Activated B cell treated with CpG ODN at 0.5 μM for 24 hours (primary cell): ENCODE measurements at regions of chr6 and their contacts with region 1.

Region 1: DNA sequence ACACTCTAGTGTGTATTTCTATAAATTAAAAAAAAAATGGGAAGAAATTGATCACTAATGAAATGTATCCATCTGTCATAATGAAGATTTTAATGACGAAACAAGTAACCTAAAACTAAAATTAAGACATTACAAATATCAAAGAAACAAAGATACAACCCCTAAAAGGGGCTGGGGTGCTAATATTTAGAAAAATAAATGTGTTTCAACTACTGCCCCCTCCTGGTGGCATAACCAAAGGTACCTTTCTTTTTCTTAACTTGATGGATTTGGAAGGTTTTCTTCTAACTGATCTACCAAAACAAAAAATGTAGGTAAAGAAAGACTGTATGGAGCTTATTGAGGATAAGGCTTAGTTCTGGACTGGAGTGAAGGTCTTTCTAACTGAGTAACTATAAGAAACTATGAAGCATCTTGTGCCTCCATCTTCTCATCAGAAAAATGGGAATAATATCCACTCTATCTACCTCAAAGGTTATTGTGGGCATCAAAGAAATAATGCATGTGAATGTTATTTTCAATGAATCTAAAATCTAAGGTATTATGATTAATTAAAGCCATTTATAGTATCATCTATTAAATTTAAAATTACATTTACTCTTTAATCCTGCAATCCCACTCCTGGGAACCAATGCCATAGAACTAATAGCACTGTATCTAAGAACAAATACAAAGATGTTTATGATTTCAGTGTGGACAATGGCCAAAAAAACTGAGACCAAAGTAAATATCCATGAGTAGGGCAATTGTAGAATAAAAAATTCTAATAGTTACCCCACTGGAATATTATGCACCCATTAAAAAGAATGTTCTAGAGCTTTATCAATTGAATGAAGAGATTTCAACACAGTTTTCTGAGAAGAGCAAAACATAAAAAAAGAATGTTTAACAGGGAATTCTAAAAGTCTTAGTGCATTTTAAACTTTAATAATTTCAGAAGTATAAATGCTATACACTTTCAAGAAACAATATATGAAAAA is 117.2 kb downstream of the BACH2 start:
- DNase-seq: no peak
- ATAC-seq: no peak
- H3K4me3 Mint-ChIP-seq: peak overlapping the region; percentile 77
- H3K27ac Mint-ChIP-seq: peak overlapping the region; percentile 92
- H3K4me1 Mint-ChIP-seq: peaks cover 79% of the 10 kb centered on the region
- H3K27me3 Mint-ChIP-seq: no peaks in the 10 kb centered on the region
- CTCF ChIP-seq: no peak

Region 2: GRCh38 chr6:89819336-89820130 is 359.9 kb before region 1 on chr6 and contains the start of gene MDN1:
- CTCF ChIA-PET with region 1: no interaction called
- POLR2A ChIA-PET with region 1: no interaction called
- intact Hi-C with region 1: loop called (anchors 10 kb)
- DNase-seq: peak; percentile 76
- ATAC-seq: peak; percentile 94
- H3K4me3 Mint-ChIP-seq: peak within 1 kb of the TSS; percentile 95
- H3K27ac Mint-ChIP-seq: peak within 1 kb of the TSS; percentile 95
- H3K4me1 Mint-ChIP-seq: peaks cover 33% of the 10 kb centered on the region
- H3K27me3 Mint-ChIP-seq: no peaks in the 10 kb centered on the region
- CTCF ChIP-seq: no peak
- total RNA-seq, gene MDN1: 59.8 and 65.4 TPM in 2 replicates

Region 3: GRCh38 chr6:89970609-89971337 is 208.7 kb before region 1 on chr6:
- CTCF ChIA-PET with region 1: interaction called, 4 read pairs
- POLR2A ChIA-PET with region 1: no interaction called
- intact Hi-C with region 1: loop called (anchors 1 kb)
- DNase-seq: no peak
- ATAC-seq: peak; percentile 61
- H3K4me3 Mint-ChIP-seq: no peak overlapping the region
- H3K27ac Mint-ChIP-seq: no peak overlapping the region
- H3K4me1 Mint-ChIP-seq: peaks cover 12% of the 10 kb centered on the region
- H3K27me3 Mint-ChIP-seq: no peaks in the 10 kb centered on the region
- CTCF ChIP-seq: no peak

Region 4: DNA sequence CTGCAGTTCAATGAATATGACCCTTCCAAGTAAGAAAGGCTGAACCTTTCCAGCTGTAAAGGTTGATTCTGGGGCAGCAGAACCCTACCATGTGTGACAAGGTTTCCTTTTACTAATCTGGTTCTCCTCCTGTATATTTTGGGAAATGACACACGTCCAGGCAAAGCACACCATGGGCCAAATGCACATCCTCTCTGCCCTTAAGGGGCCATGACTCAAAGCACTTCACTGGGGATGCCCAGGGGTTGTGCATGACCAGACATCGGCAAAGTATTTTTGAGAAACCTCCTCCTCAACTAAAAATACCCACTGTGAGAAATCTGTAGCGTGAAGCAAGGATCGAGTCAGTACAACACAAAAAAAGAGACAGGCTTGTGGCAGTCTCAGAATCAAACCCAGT is 57.5 kb before region 1 on chr6:
- CTCF ChIA-PET with region 1: interaction called, 4 read pairs
- POLR2A ChIA-PET with region 1: interaction called, 6 read pairs
- intact Hi-C with region 1: loop called (anchors 1 kb)
- DNase-seq: no peak
- ATAC-seq: peak; percentile 92
- H3K4me3 Mint-ChIP-seq: peak overlapping the region; percentile 53
- H3K27ac Mint-ChIP-seq: peak overlapping the region; percentile 79
- H3K4me1 Mint-ChIP-seq: peaks cover 81% of the 10 kb centered on the region
- H3K27me3 Mint-ChIP-seq: no peaks in the 10 kb centered on the region
- CTCF ChIP-seq: no peak

Region 5: DNA sequence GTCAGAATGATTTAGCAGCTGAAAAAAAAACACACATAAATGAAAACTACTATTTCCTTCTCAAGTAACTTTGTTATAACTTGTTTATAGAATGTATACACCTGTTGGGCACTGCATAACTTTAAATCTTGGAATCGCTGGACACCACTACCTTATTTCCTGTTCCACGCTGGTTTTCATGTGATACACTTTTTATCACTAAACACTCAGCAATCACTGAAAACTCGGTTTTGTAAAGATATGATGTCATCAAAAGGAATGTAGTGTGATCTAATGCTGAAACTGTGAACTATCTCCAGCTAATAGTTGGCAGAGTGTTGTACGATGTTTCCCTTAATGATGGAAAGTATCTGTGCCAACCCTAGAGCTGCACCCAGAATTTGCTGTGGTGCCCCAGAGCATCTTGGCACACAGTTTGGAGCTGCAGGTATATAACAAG is 10.8 kb before region 1 on chr6:
- CTCF ChIA-PET with region 1: interaction called, 13 read pairs
- POLR2A ChIA-PET with region 1: interaction called, 3 read pairs
- intact Hi-C with region 1: no loop called
- DNase-seq: no peak
- ATAC-seq: no peak
- H3K4me3 Mint-ChIP-seq: no peak overlapping the region
- H3K27ac Mint-ChIP-seq: peak overlapping the region; percentile 12
- H3K4me1 Mint-ChIP-seq: peaks cover 73% of the 10 kb centered on the region
- H3K27me3 Mint-ChIP-seq: no peaks in the 10 kb centered on the region
- CTCF ChIP-seq: no peak

Region 6: GRCh38 chr6:90478789-90479602 is 299.5 kb after region 1 on chr6:
- CTCF ChIA-PET with region 1: interaction called, 10 read pairs
- POLR2A ChIA-PET with region 1: interaction called, 3 read pairs
- intact Hi-C with region 1: loop called (anchors 2 kb)
- DNase-seq: peak; percentile 54
- ATAC-seq: peak; percentile 96
- H3K4me3 Mint-ChIP-seq: no peak overlapping the region
- H3K27ac Mint-ChIP-seq: peak overlapping the region; percentile 64
- H3K4me1 Mint-ChIP-seq: peaks cover 22% of the 10 kb centered on the region
- H3K27me3 Mint-ChIP-seq: no peaks in the 10 kb centered on the region
- CTCF ChIP-seq: peak; percentile 95